ENCODE measurements at regions of chr6 and their contacts with region 1.

Region 1: GRCh38 chr6:167668019-167668753 is 158.5 kb upstream of the AFDN start:
- DNase-seq: no peak
- ATAC-seq: peak; percentile 28 to 47

Region 2: GRCh38 chr6:167493976-167494697 is 174.0 kb before region 1 on chr6:
- intact Hi-C with region 1: loop called in 1 of 2 experiments (anchors 5 kb)
- DNase-seq: peak; percentile 67
- ATAC-seq: peak; percentile 67 to 82

Region 3: DNA sequence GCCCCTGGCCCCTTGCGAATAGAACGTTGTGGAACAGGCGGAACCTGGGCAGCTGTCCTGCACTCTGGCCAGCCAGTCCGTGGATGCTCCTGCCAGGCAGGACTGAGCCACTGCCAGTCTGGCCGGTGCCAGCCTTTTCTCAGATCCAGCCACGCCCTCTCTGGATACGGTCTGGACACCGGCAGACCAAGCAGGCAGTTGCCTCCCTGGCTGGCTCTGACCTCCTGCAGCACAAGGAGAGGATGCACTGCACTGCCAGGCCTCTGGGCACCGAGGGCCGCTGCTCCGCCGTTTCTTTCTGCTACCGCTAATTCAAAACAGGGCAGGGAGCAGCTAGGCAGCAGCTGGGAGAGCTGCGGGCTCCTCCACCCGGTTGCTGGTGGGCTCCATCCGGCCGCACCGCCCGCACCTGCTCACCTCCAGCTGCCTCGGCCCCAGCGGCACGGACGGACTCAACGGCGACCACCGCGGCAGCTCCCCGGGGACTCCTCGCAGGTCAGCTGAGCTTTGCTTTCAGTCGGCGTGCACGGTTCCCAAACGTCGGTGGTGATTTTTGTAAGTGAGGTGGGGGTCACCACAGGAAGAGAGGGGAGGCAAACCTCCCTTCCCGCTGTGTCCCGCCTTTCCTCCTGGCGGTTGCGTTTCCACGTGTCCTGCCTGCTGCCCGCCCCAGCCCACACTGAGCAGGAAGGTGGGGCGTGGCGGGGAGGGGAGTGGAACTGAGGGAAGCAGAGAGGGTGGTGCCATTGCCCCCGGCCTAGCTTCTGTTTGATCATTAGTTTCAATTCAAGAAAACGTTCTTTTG is 128.2 kb after region 1 on chr6:
- intact Hi-C with region 1: no loop called
- DNase-seq: peak; percentile 59
- ATAC-seq: peak; percentile 89

Measured in left cardiac atrium (tissue), 4 donors.